AG04449 (cell line): ENCODE measurements at regions of chr2 and their contacts with region 1.

Region 1: GRCh38 chr2:187499941-187500532 is 52.0 kb upstream of the CALCRL start:
- DNase-seq: peak; percentile 5
- H3K4me3 ChIP-seq: no peak overlapping the region
- CTCF ChIP-seq: peak; percentile 56

Region 2: DNA sequence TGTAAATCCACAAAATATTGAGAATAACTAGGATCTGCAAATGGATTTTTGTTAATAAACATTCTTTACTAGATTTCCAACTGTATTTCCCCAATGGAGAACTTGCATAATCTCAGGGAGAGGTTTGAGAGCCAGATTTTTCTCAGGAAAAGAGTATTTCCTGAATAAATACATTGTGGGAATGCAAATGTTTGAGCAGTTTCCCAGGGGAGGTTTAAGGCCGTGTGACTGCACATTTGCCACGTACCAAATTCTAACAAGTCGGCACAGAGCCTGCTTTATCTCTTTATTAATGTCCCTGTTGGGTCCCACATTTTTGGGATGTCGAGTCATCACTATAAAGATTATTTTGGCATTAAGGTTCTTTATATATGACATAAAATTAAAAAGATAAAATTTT is 27.2 kb after region 1 on chr2:
- CTCF ChIA-PET with region 1: interaction called, 17 read pairs
- POLR2A ChIA-PET with region 1: no interaction called
- DNase-seq: peak; percentile 70
- H3K4me3 ChIP-seq: no peak overlapping the region
- CTCF ChIP-seq: no peak

Region 3: DNA sequence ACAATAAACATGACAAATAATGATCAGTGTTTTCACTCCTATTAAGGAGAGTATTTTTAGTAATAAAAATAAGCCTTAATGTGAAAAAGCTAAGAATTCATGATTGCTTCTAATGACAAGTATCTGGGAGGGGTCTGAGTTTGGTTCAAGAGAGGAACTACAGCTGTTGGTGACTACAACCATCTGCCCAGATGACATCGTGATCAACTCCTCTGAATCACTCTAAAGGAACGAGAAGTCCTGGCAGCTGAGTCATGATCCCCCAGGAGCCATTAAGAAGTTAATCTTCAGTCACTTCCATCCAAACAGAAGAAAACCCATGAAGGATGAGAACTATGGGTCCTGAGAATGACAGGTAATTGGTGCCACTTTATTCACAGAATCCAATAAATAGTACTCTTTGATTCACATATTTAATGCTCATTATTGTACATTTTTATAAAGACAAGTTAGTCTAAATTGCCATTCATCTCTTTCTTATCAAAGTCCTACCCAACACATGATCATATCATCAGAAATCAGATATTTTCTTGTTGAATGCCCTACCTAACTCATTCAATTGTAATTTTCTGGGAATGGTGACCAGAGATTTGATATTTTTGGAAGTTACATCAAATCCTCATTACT is 47.4 kb after region 1 on chr2:
- CTCF ChIA-PET with region 1: interaction called, 19 read pairs
- POLR2A ChIA-PET with region 1: no interaction called
- DNase-seq: peak; percentile 81
- H3K4me3 ChIP-seq: no peak overlapping the region
- CTCF ChIP-seq: no peak

Region 4: GRCh38 chr2:187574969-187575750 is 75.1 kb after region 1 on chr2:
- CTCF ChIA-PET with region 1: interaction called, 718 read pairs
- POLR2A ChIA-PET with region 1: interaction called, 4 read pairs
- DNase-seq: peak; percentile 60
- H3K4me3 ChIP-seq: no peak overlapping the region
- CTCF ChIP-seq: no peak

Region 5: GRCh38 chr2:187594801-187595200 is 94.8 kb after region 1 on chr2:
- CTCF ChIA-PET with region 1: interaction called, 13 read pairs
- POLR2A ChIA-PET with region 1: no interaction called
- DNase-seq: no peak
- H3K4me3 ChIP-seq: no peak overlapping the region
- CTCF ChIP-seq: no peak

Region 6: DNA sequence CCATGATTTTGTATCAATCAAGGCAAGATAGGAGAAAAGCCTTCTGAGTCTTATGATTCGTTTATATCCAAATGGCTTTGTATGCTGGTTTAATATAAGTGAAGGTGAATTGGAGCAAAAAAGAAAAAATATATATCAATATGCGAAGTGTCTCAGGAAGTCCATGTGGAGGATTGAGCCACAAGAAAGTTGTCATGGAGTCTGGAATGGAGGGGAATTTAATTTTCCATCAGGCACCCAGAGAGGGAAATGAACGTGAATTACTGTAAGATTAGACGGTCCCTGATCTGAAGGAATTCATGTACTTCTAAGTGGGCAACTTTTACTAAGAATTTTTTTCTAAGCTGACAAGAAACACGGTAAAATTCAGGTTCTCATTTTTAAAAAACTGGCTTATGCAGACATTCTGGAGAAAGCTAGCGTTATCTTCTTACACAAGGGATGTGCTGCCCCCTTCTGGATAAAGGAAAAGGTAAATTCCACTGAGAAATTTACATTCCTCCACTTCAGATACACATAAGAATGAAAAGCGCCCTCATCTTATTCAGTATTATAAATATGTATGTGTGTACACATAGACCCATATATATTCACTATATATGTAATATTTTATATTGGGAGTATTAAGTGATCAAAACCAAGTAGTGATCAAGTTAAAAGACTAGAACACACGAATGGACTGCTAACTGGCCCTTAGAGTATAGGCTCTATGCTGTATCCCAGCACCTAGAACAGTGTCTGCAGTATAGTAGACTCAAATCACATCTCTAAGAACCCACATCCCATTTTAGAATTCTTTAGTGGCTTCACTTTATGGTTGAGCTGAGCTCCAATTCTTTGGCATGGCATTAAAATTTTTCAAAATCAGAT is 343.2 kb after region 1 on chr2:
- CTCF ChIA-PET with region 1: interaction called, 96 read pairs
- POLR2A ChIA-PET with region 1: no interaction called
- DNase-seq: peak; percentile 52
- H3K4me3 ChIP-seq: no peak overlapping the region
- CTCF ChIP-seq: peak; percentile 35

Region 7: DNA sequence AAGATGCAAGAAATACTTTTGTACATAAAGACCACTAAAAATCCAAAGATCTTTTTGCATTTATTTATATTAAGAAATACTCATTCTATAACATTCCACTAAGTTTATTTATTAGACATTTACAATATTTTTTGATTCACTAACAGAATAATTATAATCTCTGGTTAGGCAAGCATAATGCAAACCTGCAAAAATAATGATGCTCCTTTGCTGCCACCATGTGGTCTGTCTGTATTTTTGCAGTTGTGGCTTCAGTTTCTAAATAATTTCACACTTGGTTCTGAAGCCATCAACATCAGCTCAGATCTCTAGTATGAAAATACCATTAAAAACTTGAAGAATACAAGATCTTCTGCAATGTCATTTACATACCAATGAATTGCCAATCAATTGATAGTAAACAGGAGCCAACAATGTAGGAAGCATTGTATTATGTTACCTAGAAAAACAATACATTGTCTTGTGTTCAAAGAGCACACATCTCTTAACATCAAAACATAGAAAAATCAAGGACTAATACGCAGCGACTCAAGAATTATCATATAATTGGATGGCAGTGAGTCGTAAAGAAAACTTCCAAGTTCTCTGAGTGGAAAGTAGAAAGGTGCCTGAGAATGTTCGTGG is 1912.4 kb after region 1 on chr2:
- CTCF ChIA-PET with region 1: interaction called, 14 read pairs
- POLR2A ChIA-PET with region 1: no interaction called
- DNase-seq: no peak
- H3K4me3 ChIP-seq: no peak overlapping the region
- CTCF ChIP-seq: peak; percentile 43